ENCODE measurements at regions of chr6 and their contacts with region 1.

Region 1: GRCh38 chr6:1609648-1610496 is at the start of gene FOXC1:
- DNase-seq: peak; percentile 94
- ATAC-seq: peak; percentile 85
- H3K4me3 ChIP-seq: peak within 1 kb of the TSS; percentile 85
- H3K27ac ChIP-seq: peak within 1 kb of the TSS; percentile 99
- H3K4me1 ChIP-seq: peaks cover 2% of the 10 kb centered on the region; the same call in 1 of the 2 replicates
- H3K27me3 ChIP-seq: peaks cover 28% of the 10 kb centered on the region
- CTCF ChIP-seq: no peak
- POLR2A ChIP-seq: peak; percentile 84
- RAD21 ChIP-seq: no peak; the same call in 1 of the 2 replicates
- total RNA-seq, gene FOXC1: 1.3 and 1.9 TPM in 2 replicates

Region 2: GRCh38 chr6:1515280-1515679 is 94.6 kb before region 1 on chr6:
- CTCF ChIA-PET with region 1: no interaction called
- POLR2A ChIA-PET with region 1: no interaction called
- dilution Hi-C with region 1: no loop called
- in situ Hi-C with region 1: no loop called
- intact Hi-C with region 1: no loop called
- DNase-seq: no peak
- ATAC-seq: no peak
- H3K4me3 ChIP-seq: no peak overlapping the region
- H3K27ac ChIP-seq: no peak overlapping the region
- H3K4me1 ChIP-seq: no peaks in the 10 kb centered on the region; the same call in 1 of the 2 replicates
- H3K27me3 ChIP-seq: peaks cover 23% of the 10 kb centered on the region
- CTCF ChIP-seq: no peak
- POLR2A ChIP-seq: no peak
- RAD21 ChIP-seq: no peak

Region 3: GRCh38 chr6:1665214-1665613 is 55.3 kb after region 1 on chr6:
- CTCF ChIA-PET with region 1: interaction called, 3 read pairs
- POLR2A ChIA-PET with region 1: interaction called, 3 read pairs
- dilution Hi-C with region 1: no loop called
- in situ Hi-C with region 1: no loop called
- intact Hi-C with region 1: loop called (anchors 2 kb)
- DNase-seq: no peak
- ATAC-seq: no peak
- H3K4me3 ChIP-seq: no peak overlapping the region
- H3K27ac ChIP-seq: no peak overlapping the region
- H3K4me1 ChIP-seq: peaks cover 26% of the 10 kb centered on the region
- H3K27me3 ChIP-seq: no peaks in the 10 kb centered on the region
- CTCF ChIP-seq: no peak
- POLR2A ChIP-seq: no peak
- RAD21 ChIP-seq: no peak

Region 4: DNA sequence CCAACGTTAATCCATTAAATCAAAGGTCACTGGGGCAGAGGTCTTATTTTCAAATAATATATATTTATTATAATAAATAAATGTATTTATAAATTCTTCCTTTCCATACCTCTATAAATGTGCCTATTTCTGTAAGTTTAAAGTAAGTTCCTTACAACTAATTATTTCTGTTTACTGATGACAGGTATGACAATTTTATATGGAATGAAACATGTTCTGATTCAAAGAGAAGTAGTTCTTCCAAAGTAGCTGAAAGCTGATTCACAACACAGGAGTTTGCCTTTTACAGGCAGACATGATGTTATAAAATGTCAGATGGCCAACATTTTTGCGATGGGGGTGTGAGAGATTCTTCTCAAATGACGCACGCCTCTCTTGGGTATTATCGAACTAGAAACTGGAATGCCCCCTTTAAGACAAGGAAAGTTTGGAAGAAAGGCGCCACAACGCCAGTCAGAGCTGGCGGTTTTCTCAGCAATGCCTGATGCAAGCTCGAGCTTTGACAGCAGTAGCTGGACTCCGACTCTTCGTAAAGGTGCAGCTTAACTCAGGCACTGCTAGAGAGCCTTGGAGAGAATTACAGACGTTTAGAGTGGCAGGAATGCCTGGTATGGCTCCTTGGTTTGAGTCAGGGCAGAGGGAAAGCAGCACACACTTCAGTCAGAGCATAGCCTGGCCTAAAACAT is 91.9 kb after region 1 on chr6:
- CTCF ChIA-PET with region 1: no interaction called
- POLR2A ChIA-PET with region 1: no interaction called
- dilution Hi-C with region 1: no loop called
- in situ Hi-C with region 1: no loop called
- intact Hi-C with region 1: loop called (anchors 2 kb)
- DNase-seq: peak; percentile 95
- ATAC-seq: peak; percentile 86
- H3K4me3 ChIP-seq: no peak overlapping the region
- H3K27ac ChIP-seq: peak overlapping the region; percentile 74
- H3K4me1 ChIP-seq: peaks cover 21% of the 10 kb centered on the region
- H3K27me3 ChIP-seq: no peaks in the 10 kb centered on the region
- CTCF ChIP-seq: no peak
- POLR2A ChIP-seq: no peak; the same call in 1 of the 2 replicates
- RAD21 ChIP-seq: no peak

Region 5: GRCh38 chr6:1796706-1797529 is 187.0 kb after region 1 on chr6:
- CTCF ChIA-PET with region 1: interaction called, 3 read pairs
- POLR2A ChIA-PET with region 1: no interaction called
- dilution Hi-C with region 1: no loop called
- in situ Hi-C with region 1: no loop called
- intact Hi-C with region 1: loop called (anchors 5 kb)
- DNase-seq: peak; percentile 72
- ATAC-seq: peak; percentile 59
- H3K4me3 ChIP-seq: no peak overlapping the region
- H3K27ac ChIP-seq: no peak overlapping the region
- H3K4me1 ChIP-seq: peaks cover 10% of the 10 kb centered on the region
- H3K27me3 ChIP-seq: no peaks in the 10 kb centered on the region
- CTCF ChIP-seq: no peak
- POLR2A ChIP-seq: no peak
- RAD21 ChIP-seq: no peak

Region 6: GRCh38 chr6:1952726-1953360 is 343.0 kb after region 1 on chr6:
- CTCF ChIA-PET with region 1: no interaction called
- POLR2A ChIA-PET with region 1: no interaction called
- dilution Hi-C with region 1: no loop called
- in situ Hi-C with region 1: no loop called
- intact Hi-C with region 1: loop called (anchors 5 kb)
- DNase-seq: peak; percentile 100
- ATAC-seq: peak; percentile 98
- H3K4me3 ChIP-seq: peak overlapping the region; percentile 1; the same call in 1 of the 2 replicates
- H3K27ac ChIP-seq: peak overlapping the region; percentile 84
- H3K4me1 ChIP-seq: peaks cover 2% of the 10 kb centered on the region; the same call in 1 of the 2 replicates
- H3K27me3 ChIP-seq: no peaks in the 10 kb centered on the region
- CTCF ChIP-seq: peak; percentile 24; the same call in 1 of the 2 replicates
- POLR2A ChIP-seq: no peak; the same call in none of the 2 replicates
- RAD21 ChIP-seq: peak; percentile 42

Region 7: DNA sequence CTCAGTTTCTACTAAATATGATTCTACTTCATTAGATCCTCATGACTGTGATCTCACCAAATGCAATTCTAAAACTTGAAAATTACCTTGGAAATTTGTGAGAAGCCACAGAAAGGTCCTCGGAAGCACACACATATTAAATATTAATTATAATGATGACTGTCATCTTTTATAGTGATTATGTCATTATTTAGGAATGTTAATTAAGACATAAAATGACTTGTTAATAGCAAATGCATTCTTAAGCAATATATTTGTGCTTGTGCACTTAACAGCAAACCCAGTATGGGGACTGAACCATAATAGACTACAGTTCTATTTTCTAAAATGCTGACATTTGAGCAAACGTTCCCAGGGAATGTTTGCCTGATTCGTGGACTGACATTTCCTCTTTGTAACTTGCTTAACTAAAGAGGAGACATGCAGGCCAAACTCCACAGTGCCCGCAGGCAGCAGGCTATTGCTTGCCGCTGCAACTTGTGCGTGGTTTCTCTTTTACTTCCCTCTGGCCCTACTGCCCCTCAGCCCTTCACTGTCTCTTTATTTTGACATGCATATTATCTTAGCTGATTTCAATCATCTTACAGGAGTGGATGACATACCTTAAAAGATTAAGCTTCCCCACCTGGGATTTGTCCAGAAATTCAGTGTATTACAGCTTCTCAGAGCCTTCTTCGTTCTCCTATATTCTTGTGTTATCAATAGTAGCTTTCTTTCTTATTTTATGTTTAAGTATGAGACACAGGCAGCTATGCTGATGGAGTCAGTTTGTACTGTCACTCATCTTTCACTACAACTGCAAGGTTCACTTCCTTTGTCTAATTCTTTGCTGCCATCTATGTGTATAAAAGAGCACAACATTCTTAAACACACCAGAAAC is 494.0 kb after region 1 on chr6:
- CTCF ChIA-PET with region 1: interaction called, 9 read pairs
- POLR2A ChIA-PET with region 1: no interaction called
- dilution Hi-C with region 1: no loop called
- in situ Hi-C with region 1: no loop called
- intact Hi-C with region 1: loop called (anchors 2 kb)
- DNase-seq: peak; percentile 69
- ATAC-seq: peak; percentile 82
- H3K4me3 ChIP-seq: no peak overlapping the region
- H3K27ac ChIP-seq: no peak overlapping the region
- H3K4me1 ChIP-seq: peaks cover 3% of the 10 kb centered on the region
- H3K27me3 ChIP-seq: no peaks in the 10 kb centered on the region
- CTCF ChIP-seq: peak; percentile 81
- POLR2A ChIP-seq: 0 out of 2 replicates have a peak, but pooled peaks have one; percentile 29
- RAD21 ChIP-seq: peak; percentile 92

Region 8: DNA sequence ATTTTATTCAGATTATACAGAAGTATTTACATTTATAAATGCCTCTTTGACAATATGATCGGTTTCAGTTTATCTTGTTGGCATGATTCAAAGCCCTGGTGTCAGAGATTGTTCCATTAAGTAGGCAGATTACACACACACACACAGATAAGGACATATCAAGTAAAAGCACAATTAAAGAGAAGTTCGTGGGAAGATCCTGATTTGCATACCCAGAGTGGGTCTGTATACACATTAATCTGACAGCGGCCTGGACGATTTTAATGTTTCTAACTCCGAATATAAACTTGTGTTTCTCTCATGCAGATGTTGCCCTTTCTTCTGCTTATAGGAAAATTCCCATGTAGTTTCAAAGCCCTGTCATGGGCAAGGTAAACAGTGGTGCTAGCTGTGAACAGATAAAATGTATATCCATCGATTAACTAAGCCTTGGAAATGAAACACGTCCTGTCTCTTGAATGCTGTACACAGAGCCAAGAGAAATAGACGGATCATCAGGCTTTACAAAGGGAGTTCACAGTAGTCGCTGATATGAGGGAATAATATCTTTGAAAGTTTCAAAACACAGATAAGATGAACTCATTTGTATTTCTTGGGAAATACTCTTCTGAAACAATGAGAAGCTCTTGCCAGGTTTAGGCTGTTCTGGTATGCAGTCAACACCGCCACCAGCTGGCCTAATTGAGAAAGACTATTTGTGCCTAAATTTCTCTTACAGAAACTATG is 743.7 kb after region 1 on chr6:
- CTCF ChIA-PET with region 1: no interaction called
- POLR2A ChIA-PET with region 1: interaction called, 19 read pairs
- dilution Hi-C with region 1: no loop called
- in situ Hi-C with region 1: no loop called
- intact Hi-C with region 1: loop called (anchors 2 kb)
- DNase-seq: peak; percentile 86
- ATAC-seq: peak; percentile 72
- H3K4me3 ChIP-seq: no peak overlapping the region
- H3K27ac ChIP-seq: peak overlapping the region; percentile 15; the same call in 1 of the 2 replicates
- H3K4me1 ChIP-seq: peaks cover 8% of the 10 kb centered on the region
- H3K27me3 ChIP-seq: no peaks in the 10 kb centered on the region
- CTCF ChIP-seq: peak; percentile 94
- POLR2A ChIP-seq: no peak
- RAD21 ChIP-seq: peak; percentile 90